Right cardiac atrium (tissue), 5 donors: ENCODE measurements at regions of chr18 and their contacts with region 1.

Region 1: GRCh38 chr18:75478996-75479880 is 51.7 kb upstream of the SMIM21 start:
- DNase-seq: no peak
- ATAC-seq: peak; percentile 78
- H3K4me3 ChIP-seq: no peak overlapping the region
- H3K27ac ChIP-seq: no peak overlapping the region
- H3K4me1 ChIP-seq: no peaks in the 10 kb centered on the region
- H3K27me3 ChIP-seq: no peaks in the 10 kb centered on the region

Region 2: GRCh38 chr18:74644713-74645112 is 834.5 kb before region 1 on chr18:
- intact Hi-C with region 1: loop called in 1 of 4 experiments (anchors 5 kb)
- DNase-seq: no peak
- ATAC-seq: no peak
- H3K4me3 ChIP-seq: no peak overlapping the region
- H3K27ac ChIP-seq: no peak overlapping the region
- H3K4me1 ChIP-seq: no peaks in the 10 kb centered on the region
- H3K27me3 ChIP-seq: no peaks in the 10 kb centered on the region